Naive thymus-derived CD4-positive, alpha-beta T cell (primary cell): ENCODE measurements at regions of chr5 and their contacts with region 1.

Region 1: GRCh38 chr5:139293504-139294373 is at the start of gene MATR3:
- DNase-seq: peak; percentile 83 to 94 (median 91)
- ATAC-seq: peak; percentile 95
- H3K4me3 ChIP-seq: peak within 1 kb of the TSS; percentile 87
- H3K4me3 Mint-ChIP-seq: peak within 1 kb of the TSS; percentile 91 to 99 (median 98)
- H3K27ac ChIP-seq: peak within 1 kb of the TSS; percentile 98
- H3K27ac Mint-ChIP-seq: peak within 1 kb of the TSS; percentile 96 to 100 (median 99)
- H3K4me1 ChIP-seq: peaks cover 29 to 37% of the 10 kb centered on the region in 2 donors
- H3K4me1 Mint-ChIP-seq: peaks cover 33 to 51% (median 42%) of the 10 kb centered on the region in 7 donors
- H3K27me3 ChIP-seq: no peaks in the 10 kb centered on the region
- H3K27me3 Mint-ChIP-seq: no peaks in the 10 kb centered on the region
- total RNA-seq, gene MATR3: 219 to 333 (median 274) TPM

Region 2: DNA sequence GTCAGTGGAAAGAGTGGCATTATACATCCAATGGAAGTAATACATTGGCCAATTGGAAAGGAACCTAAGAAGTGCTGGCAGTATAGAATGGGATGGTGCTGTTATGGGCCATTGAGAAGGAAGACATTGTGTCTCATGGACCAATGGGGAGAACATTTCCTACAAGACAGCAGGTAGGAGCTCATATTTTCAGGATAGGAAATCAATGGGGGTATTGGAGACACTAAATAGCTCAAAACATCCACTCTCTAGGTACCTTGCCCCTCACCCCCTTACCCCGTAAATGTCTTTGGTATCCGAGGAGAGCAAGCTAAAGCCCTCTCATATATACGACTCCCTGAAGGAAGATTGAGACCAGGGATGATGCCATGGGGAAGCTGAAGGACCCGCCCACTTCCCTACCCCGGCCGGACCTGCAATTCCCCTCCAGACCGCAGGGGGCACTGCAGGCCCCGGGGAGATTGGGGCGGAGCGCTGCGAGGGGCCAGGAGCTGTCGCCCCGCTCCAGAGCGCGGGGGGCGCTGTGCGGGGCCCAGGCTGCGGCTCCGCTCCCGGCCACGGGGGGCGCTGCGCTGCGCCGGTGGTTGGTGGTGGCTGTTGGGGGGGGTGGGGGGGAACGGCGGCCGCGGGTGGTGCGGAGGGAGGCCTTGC is 941.5 kb before region 1 on chr5 and contains the start of gene KDM3B:
- CTCF ChIA-PET with region 1: no interaction called
- POLR2A ChIA-PET with region 1: interaction called, 5 read pairs
- intact Hi-C with region 1: loop called in 1 of 2 experiments (anchors 5 kb)
- DNase-seq: peak; percentile 82 to 100 (median 96)
- ATAC-seq: peak; percentile 96
- H3K4me3 ChIP-seq: peak within 1 kb of the TSS; percentile 93
- H3K4me3 Mint-ChIP-seq: peak within 1 kb of the TSS; percentile 88 to 98 (median 96)
- H3K27ac ChIP-seq: peak within 1 kb of the TSS; percentile 91
- H3K27ac Mint-ChIP-seq: peak within 1 kb of the TSS; percentile 90 to 98 (median 96)
- H3K4me1 ChIP-seq: peaks cover 18 to 32% of the 10 kb centered on the region in 2 donors
- H3K4me1 Mint-ChIP-seq: peaks cover 30 to 54% (median 48%) of the 10 kb centered on the region in 7 donors
- H3K27me3 ChIP-seq: no peaks in the 10 kb centered on the region
- H3K27me3 Mint-ChIP-seq: no peaks in the 10 kb centered on the region
- total RNA-seq, gene KDM3B: 67.7 to 90.2 (median 82.8) TPM

Region 3: GRCh38 chr5:139094154-139095131 is 199.3 kb before region 1 on chr5:
- CTCF ChIA-PET with region 1: no interaction called
- POLR2A ChIA-PET with region 1: no interaction called
- intact Hi-C with region 1: no loop called
- DNase-seq: no peak
- ATAC-seq: no peak
- H3K4me3 ChIP-seq: no peak overlapping the region
- H3K4me3 Mint-ChIP-seq: no peak overlapping the region
- H3K27ac ChIP-seq: no peak overlapping the region
- H3K27ac Mint-ChIP-seq: no peak overlapping the region
- H3K4me1 ChIP-seq: no peaks in the 10 kb centered on the region
- H3K4me1 Mint-ChIP-seq: peaks cover 0 to 5% (median 1%) of the 10 kb centered on the region in 7 donors
- H3K27me3 ChIP-seq: no peaks in the 10 kb centered on the region
- H3K27me3 Mint-ChIP-seq: no peaks in the 10 kb centered on the region

Region 4: GRCh38 chr5:139312075-139312474 is 18.3 kb after region 1 on chr5:
- CTCF ChIA-PET with region 1: interaction called, 3 read pairs
- POLR2A ChIA-PET with region 1: interaction called, 67 read pairs
- intact Hi-C with region 1: loop called in 1 of 2 experiments (anchors 1 kb)
- DNase-seq: no peak
- ATAC-seq: no peak
- H3K4me3 ChIP-seq: no peak overlapping the region
- H3K4me3 Mint-ChIP-seq: peak overlapping the region in 3 of 10 donors; percentile 27 to 53 (median 43)
- H3K27ac ChIP-seq: no peak overlapping the region
- H3K27ac Mint-ChIP-seq: peak overlapping the region in 2 of 9 donors; percentile 12 to 25
- H3K4me1 ChIP-seq: peaks cover 57 to 62% of the 10 kb centered on the region in 2 donors
- H3K4me1 Mint-ChIP-seq: peaks cover 43 to 82% (median 70%) of the 10 kb centered on the region in 7 donors
- H3K27me3 ChIP-seq: no peaks in the 10 kb centered on the region
- H3K27me3 Mint-ChIP-seq: no peaks in the 10 kb centered on the region

Region 5: DNA sequence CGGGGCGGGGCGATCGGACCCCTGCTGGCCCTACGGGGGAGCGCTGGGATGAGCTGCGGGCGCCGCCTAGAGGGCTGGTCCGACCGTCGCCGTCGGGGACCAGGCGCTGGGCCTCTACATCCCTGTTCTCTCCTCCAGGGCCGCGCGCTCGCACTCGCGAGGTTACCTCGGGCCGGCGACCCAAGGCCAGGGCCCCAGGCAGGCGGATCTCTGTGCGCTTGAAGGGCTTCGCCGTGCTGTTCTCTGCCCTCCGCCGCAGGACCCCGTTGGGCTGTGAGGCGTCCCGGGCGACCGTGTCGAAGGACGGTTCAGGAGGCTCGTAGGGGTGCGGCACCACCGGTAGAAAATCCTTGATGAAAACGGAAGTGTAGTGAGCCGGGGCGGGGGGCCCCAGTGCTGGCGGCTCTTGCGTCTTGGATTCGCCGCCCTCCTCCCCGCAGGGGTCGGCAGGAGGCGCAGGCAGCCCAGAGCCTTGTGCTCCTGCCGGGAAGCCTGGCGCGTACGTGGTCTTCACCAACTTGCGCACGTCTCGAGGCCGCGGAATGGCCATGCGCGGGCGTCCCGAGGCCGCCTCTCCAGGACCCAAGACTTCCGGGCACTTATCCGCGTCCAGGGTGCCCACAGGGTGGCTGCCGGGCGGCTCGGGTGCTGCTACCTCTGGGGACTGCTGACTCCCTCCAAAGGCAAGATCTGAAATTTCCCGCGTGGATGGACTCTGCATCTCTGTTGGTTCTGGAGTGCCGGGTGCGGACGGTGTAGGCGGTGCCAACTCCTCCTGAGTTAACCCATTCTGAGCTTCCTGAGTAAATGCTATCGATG is 99.1 kb after region 1 on chr5:
- CTCF ChIA-PET with region 1: no interaction called
- POLR2A ChIA-PET with region 1: interaction called, 4 read pairs
- intact Hi-C with region 1: loop called (anchors 1 to 2 kb)
- DNase-seq: peak; percentile 39 to 87 (median 60)
- ATAC-seq: peak; percentile 82
- H3K4me3 ChIP-seq: peak overlapping the region; percentile 76
- H3K4me3 Mint-ChIP-seq: peak overlapping the region; percentile 87 to 97 (median 90)
- H3K27ac ChIP-seq: peak overlapping the region; percentile 17
- H3K27ac Mint-ChIP-seq: peak overlapping the region in 6 of 9 donors; percentile 7 to 97 (median 59)
- H3K4me1 ChIP-seq: peaks cover 5 to 34% of the 10 kb centered on the region in 2 donors
- H3K4me1 Mint-ChIP-seq: peaks cover 12 to 61% (median 23%) of the 10 kb centered on the region in 7 donors
- H3K27me3 ChIP-seq: no peaks in the 10 kb centered on the region
- H3K27me3 Mint-ChIP-seq: no peaks in the 10 kb centered on the region

Region 6: DNA sequence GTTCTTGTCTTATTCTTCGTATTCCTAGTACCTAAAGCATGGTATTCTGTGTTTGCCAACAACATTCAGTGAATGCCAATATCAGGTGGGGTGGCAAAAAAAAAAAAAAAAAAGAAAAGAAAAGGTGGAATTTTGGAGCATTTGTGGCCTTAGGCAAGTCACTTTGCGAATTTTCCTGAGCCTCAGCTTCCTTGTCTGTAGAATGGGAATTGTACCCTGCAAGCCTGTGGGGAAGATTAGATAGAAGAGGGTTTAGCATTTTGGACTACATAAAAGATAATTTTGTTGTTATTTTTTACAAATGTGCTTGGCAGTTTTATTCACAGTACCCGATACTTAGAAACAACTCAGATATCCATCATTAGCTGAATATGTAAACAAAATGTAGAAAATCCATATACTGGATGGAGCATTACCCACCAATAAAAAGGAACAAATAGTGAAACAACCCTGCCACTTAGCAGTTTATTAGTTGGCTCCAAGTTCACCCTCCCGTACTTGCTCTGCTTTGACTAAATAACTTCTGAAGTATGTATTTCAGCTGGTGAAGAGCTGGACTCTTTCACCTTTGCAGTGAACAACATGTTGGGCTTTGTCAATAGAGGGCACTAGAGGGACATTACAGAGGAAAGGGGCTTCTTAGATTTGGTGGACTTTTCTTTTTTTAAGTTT is 281.0 kb after region 1 on chr5:
- CTCF ChIA-PET with region 1: no interaction called
- POLR2A ChIA-PET with region 1: interaction called, 3 read pairs
- intact Hi-C with region 1: loop called in 1 of 2 experiments (anchors 5 kb)
- DNase-seq: peak in 7 of 9 donors; percentile 27 to 60 (median 47)
- ATAC-seq: peak; percentile 75
- H3K4me3 ChIP-seq: no peak overlapping the region
- H3K4me3 Mint-ChIP-seq: peak overlapping the region in 9 of 10 donors; percentile 11 to 80 (median 53)
- H3K27ac ChIP-seq: peak overlapping the region; percentile 57
- H3K27ac Mint-ChIP-seq: peak overlapping the region; percentile 62 to 96 (median 90)
- H3K4me1 ChIP-seq: peaks cover 61 to 68% of the 10 kb centered on the region in 2 donors
- H3K4me1 Mint-ChIP-seq: peaks cover 56 to 88% (median 74%) of the 10 kb centered on the region in 7 donors
- H3K27me3 ChIP-seq: no peaks in the 10 kb centered on the region
- H3K27me3 Mint-ChIP-seq: no peaks in the 10 kb centered on the region